Psoas muscle (tissue), 8 donors: ENCODE measurements at regions of chr22 and their contacts with region 1.

Region 1: DNA sequence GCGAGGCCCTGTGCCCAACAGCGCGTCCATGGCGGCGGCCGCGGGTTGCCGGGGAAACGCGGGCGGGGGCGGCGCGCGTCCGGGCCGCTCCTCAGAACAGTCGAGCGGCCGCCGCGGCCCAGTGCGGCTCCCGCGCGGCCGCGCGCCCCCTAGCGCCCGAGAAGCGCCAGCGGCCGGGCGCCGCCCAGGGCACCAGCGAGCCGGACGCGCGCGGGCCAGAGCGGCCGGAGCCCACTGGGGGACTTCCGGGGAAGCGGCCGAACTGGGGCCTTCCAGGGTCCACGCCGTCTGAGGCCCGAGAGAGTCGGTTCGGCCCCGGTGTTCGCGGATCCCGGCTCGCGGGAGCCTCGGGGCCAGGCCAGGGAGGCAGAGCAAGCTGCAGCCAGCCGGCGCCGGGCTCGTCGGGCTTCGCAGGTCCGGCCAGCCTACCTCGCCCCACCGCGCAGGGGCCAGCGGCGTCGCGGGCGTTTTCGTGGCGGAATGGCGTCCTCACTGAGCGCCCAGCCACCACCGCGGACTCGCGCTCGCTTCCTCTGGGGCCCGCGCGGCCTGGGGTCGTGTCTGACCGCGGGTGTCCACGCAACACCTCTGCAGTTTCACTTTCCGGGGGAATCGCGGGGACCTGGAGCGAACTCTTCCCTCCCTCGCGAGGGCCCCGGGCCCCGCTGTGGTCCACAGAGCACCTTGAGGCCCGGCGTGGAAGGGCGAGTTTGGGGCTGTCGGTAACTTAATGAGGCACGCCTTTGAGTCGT is at the start of gene DENND6B:
- DNase-seq: peak; percentile 88 to 91
- ATAC-seq: peak; percentile 93 to 98 (median 94)
- H3K4me3 ChIP-seq: peak within 1 kb of the TSS; percentile 88
- H3K27ac ChIP-seq: peak within 1 kb of the TSS; percentile 95
- H3K4me1 ChIP-seq: peaks cover 11% of the 10 kb centered on the region
- H3K27me3 ChIP-seq: no peaks in the 10 kb centered on the region
- CTCF ChIP-seq: peak; percentile 79
- total RNA-seq, gene DENND6B: 0.57 to 1.6 (median 0.94) TPM

Region 2: DNA sequence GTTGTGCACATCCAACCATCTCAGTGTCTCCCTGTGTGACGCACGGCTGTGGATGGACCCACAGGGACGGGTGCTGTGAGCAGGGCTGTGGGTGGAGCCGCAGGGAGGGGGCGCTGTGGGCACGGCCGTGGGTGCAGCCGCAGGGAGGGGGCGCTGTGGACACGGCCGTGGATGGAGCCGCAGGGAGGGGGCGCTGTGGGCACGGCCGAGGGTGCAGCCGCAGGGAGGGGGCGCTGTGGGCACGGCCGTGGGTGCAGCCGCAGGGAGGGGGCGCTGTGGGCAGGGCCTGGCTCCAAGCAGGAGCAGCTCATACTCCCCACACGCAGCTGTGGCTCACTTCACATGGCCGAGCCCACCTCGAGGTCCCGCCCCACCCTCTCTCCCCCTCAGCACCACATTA is 51.0 kb before region 1 on chr22:
- intact Hi-C with region 1: loop called (anchors 2 kb)
- DNase-seq: peak in 1 of 2 donors; percentile 61
- ATAC-seq: peak; percentile 73 to 80 (median 77)
- H3K4me3 ChIP-seq: no peak overlapping the region
- H3K27ac ChIP-seq: no peak overlapping the region
- H3K4me1 ChIP-seq: peaks cover 9% of the 10 kb centered on the region
- H3K27me3 ChIP-seq: peaks cover 0 to 11% (median 7%) of the 10 kb centered on the region in 3 donors
- CTCF ChIP-seq: peak; percentile 48

Region 3: DNA sequence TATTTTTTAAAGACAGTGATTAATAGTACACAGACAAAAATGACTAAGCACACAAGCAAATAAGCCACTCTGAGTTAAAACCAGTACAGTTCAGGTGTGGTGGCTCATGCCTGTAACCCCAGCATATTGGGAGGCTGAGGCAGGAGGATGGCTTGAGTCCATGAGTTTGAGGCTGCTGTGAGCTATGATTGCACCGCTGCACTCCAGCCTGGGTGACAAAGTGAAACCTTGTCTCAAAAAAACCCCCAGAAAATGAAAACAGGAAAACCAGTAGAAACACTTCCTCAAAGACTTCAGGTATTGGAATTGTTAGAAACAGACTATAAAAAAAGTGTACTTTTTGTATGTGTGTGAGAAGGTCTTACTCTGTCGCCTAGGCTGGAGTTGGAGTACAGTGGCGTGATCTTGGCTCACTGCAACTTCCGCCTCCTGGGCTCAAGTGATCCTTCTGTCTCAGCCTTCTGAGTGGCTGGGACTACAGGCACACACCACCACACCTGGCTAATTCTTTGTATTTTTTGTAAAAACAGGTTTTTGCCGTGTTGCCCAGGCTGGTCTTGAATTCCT is 49.0 kb after region 1 on chr22:
- intact Hi-C with region 1: no loop called
- DNase-seq: no peak
- ATAC-seq: no peak
- H3K4me3 ChIP-seq: no peak overlapping the region
- H3K27ac ChIP-seq: no peak overlapping the region
- H3K4me1 ChIP-seq: no peaks in the 10 kb centered on the region
- H3K27me3 ChIP-seq: no peaks in the 10 kb centered on the region
- CTCF ChIP-seq: no peak

Region 4: GRCh38 chr22:50551160-50551752 is 224.1 kb after region 1 on chr22:
- intact Hi-C with region 1: no loop called
- DNase-seq: peak in 1 of 2 donors; percentile 11
- ATAC-seq: no peak
- H3K4me3 ChIP-seq: no peak overlapping the region
- H3K27ac ChIP-seq: no peak overlapping the region
- H3K4me1 ChIP-seq: no peaks in the 10 kb centered on the region
- H3K27me3 ChIP-seq: peaks cover 0 to 46% (median 25%) of the 10 kb centered on the region in 3 donors
- CTCF ChIP-seq: no peak